ENCODE measurements at regions of chr5 and their contacts with region 1.

Region 1: GRCh38 chr5:79119486-79119885 is 7.9 kb downstream of the BHMT start:
- DNase-seq: no peak
- ATAC-seq: no peak
- H3K4me3 ChIP-seq: no peak overlapping the region
- H3K27ac ChIP-seq: no peak overlapping the region
- H3K4me1 ChIP-seq: peaks cover 0 to 8% (median 0%) of the 10 kb centered on the region in 9 donors
- H3K27me3 ChIP-seq: peaks cover 0 to 16% (median 9%) of the 10 kb centered on the region in 7 donors
- CTCF ChIP-seq: no peak

Region 2: DNA sequence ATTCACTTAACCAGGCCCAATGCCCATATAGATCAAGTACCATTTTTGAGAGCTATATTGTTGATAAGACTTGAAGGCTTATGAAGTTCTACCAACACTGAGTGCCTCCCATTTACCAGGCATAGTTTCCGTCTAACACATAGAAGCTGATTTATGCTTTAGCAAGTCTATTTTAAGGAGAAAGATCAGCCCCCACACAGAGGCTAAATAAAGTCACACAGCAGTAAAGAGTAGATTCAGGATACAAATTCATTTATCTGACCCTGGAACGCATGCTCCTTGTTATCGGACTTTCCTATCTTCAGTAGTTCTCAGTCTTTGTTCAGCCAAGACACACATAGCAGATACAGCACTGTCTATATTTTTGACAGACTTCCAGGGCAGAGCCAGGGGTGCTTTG is 84.2 kb before region 1 on chr5:
- intact Hi-C with region 1: loop called in 1 of 10 experiments (anchors 5 kb)
- DNase-seq: no peak
- ATAC-seq: no peak
- H3K4me3 ChIP-seq: no peak overlapping the region
- H3K27ac ChIP-seq: no peak overlapping the region
- H3K4me1 ChIP-seq: no peaks in the 10 kb centered on the region
- H3K27me3 ChIP-seq: no peaks in the 10 kb centered on the region
- CTCF ChIP-seq: no peak

Region 3: DNA sequence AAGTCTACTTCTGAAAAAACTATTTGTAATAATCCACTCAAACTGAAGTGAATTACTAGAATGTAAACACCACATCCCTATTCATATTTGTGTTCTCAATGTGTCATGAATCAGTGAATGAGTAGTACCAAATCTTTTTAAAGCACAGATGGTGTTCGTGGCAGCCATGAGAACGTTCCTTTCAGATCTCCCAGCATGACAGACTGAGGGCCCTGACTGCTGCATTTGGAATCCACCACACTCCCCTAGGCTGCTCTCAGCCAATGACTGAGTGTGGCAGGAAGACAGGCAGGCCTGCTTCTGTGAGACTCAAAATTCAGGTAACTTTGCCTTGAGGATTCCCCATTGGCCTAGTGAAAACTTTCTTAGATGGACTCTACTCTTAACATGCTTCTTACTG is 105.5 kb after region 1 on chr5:
- intact Hi-C with region 1: no loop called
- DNase-seq: no peak
- ATAC-seq: no peak
- H3K4me3 ChIP-seq: no peak overlapping the region
- H3K27ac ChIP-seq: no peak overlapping the region
- H3K4me1 ChIP-seq: no peaks in the 10 kb centered on the region
- H3K27me3 ChIP-seq: no peaks in the 10 kb centered on the region
- CTCF ChIP-seq: no peak